Activated T-helper 2 cell treated with anti-CD3 and anti-CD28 coated beads, Interferon-gamma antibody, Interleukin-2, Interleukin-4, amounts not matched to agents 10 μg/mL and 5 μg/mL and 100 μg/mL, durations not matched to agents 14 hours and 24 hours and 36 hours (primary cell): ENCODE measurements at regions of chr14 and their contacts with region 1.

Region 1: DNA sequence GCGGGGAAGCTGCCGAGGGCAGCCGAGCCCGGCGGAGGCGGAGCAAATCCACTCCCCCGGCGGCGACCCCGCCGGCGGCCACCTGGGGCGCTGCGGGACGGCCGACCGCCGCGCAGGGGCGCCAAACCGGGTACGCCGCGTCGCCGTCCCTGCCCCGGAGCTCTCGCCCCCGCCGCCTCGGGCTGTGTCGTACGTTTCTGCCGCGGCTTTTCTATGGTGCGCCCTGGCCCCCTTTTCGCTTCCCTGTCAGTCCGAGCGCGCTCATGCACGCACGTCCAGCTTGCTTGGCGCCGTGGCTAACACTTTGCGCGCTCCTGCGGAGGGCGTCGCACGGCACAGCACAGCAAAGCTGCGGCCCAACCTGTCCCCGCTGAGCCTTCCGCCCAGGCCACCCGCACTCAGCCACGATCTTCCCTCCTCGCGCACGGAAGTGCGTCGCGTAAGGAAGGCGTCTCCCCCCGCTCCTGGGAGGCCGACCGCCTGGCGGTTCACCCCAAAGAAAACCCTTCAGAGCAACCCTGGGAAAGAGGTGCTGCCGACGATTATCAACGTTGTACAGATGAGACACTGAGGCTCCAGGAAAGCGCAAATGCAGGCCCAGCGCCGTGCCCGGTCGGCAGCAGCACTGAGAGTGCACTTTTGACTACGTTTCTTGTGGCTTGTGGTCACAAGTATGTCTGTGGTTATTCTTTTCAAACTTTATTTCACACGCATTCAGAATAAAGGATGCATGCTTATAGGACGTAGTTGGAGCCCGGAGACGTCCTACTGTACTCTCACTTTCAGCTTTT is at the start of gene HECTD1:
- DNase-seq: peak; percentile 85
- H3K4me3 Mint-ChIP-seq: peak within 1 kb of the TSS; percentile 86
- H3K27ac Mint-ChIP-seq: peak within 1 kb of the TSS; percentile 100
- H3K4me1 Mint-ChIP-seq: peaks cover 29% of the 10 kb centered on the region
- H3K27me3 Mint-ChIP-seq: peaks cover 2% of the 10 kb centered on the region
- total RNA-seq, gene HECTD1: 109 and 114 TPM in 2 replicates

Region 2: GRCh38 chr14:30558675-30559555 is 649.0 kb before region 1 on chr14 and contains the start of gene G2E3:
- intact Hi-C with region 1: loop called (anchors 10 kb)
- DNase-seq: peak; percentile 89
- H3K4me3 Mint-ChIP-seq: peak within 1 kb of the TSS; percentile 99
- H3K27ac Mint-ChIP-seq: peak within 1 kb of the TSS; percentile 100
- H3K4me1 Mint-ChIP-seq: peaks cover 25% of the 10 kb centered on the region
- H3K27me3 Mint-ChIP-seq: no peaks in the 10 kb centered on the region
- total RNA-seq, gene G2E3: 24.7 and 26.4 TPM in 2 replicates

Region 3: DNA sequence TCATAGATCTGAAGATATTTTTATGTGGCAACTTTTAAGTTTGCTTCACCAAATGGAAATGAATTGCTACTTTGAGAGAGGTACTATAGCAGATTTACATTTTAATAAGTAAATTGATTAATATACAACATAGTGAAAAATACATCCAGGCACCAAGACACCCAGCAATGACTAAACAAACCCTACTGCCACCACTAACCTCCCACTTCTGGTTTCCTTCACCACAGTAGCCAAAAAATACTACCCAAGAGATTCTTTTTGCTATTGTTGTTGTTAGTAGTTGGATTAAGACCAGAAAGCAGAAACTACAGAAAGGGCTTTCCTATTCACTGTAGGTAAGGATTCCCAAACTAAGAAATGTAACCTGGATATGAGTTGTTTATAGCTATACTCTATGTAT is 279.5 kb before region 1 on chr14:
- intact Hi-C with region 1: no loop called
- DNase-seq: no peak
- H3K4me3 Mint-ChIP-seq: no peak overlapping the region
- H3K27ac Mint-ChIP-seq: no peak overlapping the region
- H3K4me1 Mint-ChIP-seq: peaks cover 13% of the 10 kb centered on the region
- H3K27me3 Mint-ChIP-seq: no peaks in the 10 kb centered on the region

Region 4: DNA sequence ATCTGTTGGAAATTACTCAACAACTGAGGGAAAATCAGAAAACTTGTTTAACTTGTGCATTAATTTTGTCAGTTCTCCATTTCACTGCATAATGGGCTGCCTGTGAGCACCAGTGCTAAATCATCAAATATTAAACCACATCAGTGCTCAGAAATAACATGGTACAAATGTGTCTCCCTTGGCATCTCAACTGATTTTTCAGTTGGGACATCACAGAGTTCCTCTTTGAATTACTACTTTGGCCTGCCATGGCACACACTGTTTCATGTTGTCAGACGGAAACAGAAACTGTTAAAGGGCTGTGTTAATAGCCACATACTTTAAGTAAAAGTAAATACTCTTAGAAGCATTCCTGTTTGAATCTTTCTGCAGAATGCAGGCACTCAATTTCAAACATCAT is 139.7 kb before region 1 on chr14:
- intact Hi-C with region 1: no loop called
- DNase-seq: no peak
- H3K4me3 Mint-ChIP-seq: no peak overlapping the region
- H3K27ac Mint-ChIP-seq: no peak overlapping the region
- H3K4me1 Mint-ChIP-seq: no peaks in the 10 kb centered on the region
- H3K27me3 Mint-ChIP-seq: no peaks in the 10 kb centered on the region

Region 5: DNA sequence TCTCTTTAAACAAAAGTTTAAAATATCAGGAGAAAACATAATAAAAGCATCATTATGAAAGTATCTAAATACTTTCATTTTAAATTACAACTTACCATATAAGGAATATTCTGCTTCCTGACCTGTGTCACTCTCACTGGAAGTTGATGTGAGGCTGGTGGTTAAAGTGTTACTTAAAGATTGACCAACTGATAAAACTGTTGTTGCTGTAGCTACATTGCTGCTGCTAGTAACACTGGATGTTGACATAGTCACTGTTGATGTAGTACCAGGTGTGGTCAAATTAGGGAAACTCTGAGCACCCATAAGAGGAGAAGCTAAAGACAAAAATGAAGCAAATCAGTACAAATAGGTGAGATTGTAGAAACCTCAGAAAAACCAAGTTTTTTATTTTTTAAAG is 80.3 kb before region 1 on chr14:
- intact Hi-C with region 1: loop called (anchors 2 kb)
- DNase-seq: peak; percentile 53
- H3K4me3 Mint-ChIP-seq: no peak overlapping the region
- H3K27ac Mint-ChIP-seq: peak overlapping the region; percentile 44
- H3K4me1 Mint-ChIP-seq: peaks cover 35% of the 10 kb centered on the region
- H3K27me3 Mint-ChIP-seq: no peaks in the 10 kb centered on the region

Region 6: GRCh38 chr14:31357279-31357678 is 149.3 kb after region 1 on chr14:
- intact Hi-C with region 1: loop called (anchors 5 kb)
- DNase-seq: no peak
- H3K4me3 Mint-ChIP-seq: no peak overlapping the region
- H3K27ac Mint-ChIP-seq: no peak overlapping the region
- H3K4me1 Mint-ChIP-seq: peaks cover 2% of the 10 kb centered on the region
- H3K27me3 Mint-ChIP-seq: no peaks in the 10 kb centered on the region

Region 7: GRCh38 chr14:31449971-31450610 is 242.1 kb after region 1 on chr14:
- intact Hi-C with region 1: loop called (anchors 1 kb)
- DNase-seq: no peak
- H3K4me3 Mint-ChIP-seq: no peak overlapping the region
- H3K27ac Mint-ChIP-seq: no peak overlapping the region
- H3K4me1 Mint-ChIP-seq: peaks cover 10% of the 10 kb centered on the region
- H3K27me3 Mint-ChIP-seq: no peaks in the 10 kb centered on the region

Region 8: GRCh38 chr14:32076278-32077080 is 868.5 kb after region 1 on chr14:
- intact Hi-C with region 1: loop called (anchors 5 kb)
- DNase-seq: peak; percentile 73
- H3K4me3 Mint-ChIP-seq: peak overlapping the region; percentile 97
- H3K27ac Mint-ChIP-seq: peak overlapping the region; percentile 91
- H3K4me1 Mint-ChIP-seq: peaks cover 38% of the 10 kb centered on the region
- H3K27me3 Mint-ChIP-seq: peaks cover 23% of the 10 kb centered on the region